ENCODE measurements at regions of chr17 and their contacts with region 1.

Region 1: DNA sequence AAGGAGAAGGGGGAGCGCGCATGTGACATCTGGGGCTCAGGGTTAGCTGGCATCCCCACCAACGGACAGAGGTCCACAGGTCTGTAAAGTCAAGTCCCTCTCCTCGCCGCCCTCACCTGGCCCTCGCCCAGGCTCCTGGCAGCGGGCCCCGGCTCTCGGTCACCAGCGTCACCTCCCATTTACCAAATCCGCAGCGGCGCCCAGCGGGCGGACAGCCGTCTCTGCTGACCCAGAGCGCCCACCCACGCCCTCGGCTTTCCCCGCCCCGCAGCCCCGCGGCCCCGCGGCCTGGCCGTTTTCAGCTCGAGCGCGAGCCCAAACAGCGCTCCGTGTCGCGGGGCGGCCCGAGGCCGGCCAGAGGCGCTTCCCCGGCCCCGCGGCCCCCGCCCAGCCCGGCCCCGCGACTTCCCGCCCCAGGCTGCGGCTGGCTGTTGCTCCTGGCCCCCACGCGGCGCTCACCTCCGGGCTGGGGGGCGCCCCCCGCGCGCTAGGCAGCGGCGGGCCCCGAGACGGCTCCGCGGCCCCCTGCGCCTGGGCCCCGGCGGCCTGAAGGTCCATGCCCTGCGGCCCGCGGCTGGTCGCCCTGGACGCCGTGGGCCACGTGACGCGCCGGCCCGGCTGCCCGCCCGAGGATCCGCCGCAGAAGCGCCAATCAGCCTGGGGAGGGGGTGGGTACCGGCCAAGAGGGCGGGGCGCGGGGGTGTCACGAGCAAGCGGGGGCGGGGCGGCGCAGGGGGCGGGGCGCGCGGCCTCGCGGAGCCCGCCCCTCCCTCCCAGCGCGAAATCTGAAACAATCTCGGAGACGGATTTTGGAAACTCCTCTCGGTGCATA is at the start of gene COPRS:
- DNase-seq: peak; percentile 83
- H3K4me3 Mint-ChIP-seq: peak within 1 kb of the TSS; percentile 86
- H3K27ac Mint-ChIP-seq: peak within 1 kb of the TSS; percentile 42
- H3K4me1 Mint-ChIP-seq: peaks cover 17% of the 10 kb centered on the region
- H3K27me3 Mint-ChIP-seq: no peaks in the 10 kb centered on the region
- total RNA-seq, gene COPRS: 34.4 to 37.6 TPM

Region 2: DNA sequence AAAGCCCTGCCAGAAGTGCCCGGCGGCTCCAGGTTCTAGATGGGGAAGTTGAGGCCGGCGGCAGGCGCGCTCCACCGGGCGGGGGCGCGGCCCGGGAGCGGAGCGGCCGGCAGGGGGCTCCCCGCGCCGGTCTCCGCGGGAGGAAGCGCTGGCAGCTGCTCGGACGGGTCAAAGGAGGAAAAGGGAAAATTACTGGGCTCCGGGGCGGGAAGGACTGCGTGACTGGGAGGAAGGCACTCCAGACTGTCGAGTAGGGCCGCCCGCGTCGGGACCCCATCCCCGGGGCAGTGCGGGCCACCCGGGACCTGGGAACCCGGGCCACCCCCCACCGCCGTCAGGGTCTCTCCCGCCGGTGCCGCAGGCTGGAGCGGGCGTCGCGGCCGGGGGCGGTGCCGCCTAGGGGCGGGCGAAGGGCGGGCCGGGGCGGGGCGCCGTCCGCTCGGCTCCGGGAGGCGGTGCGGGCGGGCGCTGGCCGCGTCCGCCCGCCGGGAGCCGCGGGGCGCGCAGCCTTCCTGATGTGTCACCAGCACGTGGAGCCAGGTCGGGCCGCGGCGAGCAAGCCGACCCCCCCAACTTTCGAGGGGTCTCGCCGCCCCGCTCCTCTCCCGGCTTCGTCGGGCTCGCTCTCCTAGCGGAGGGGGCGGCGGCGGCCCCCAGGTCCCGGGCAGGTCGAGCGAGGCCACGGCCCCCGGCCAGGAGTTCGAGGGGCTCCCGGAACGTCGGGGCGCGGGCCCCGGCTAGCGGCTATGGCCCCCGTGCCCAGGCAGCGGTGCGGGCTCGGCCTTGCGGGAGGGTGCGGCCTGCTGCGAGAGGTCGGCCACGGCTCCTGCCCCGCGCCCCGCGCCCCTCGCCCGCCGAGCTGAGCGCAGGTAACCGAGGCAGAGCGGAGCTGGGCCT is 299.9 kb before region 1 on chr17:
- CTCF ChIA-PET with region 1: no interaction called
- intact Hi-C with region 1: loop called (anchors 5 kb)
- DNase-seq: peak; percentile 61
- H3K4me3 Mint-ChIP-seq: peak overlapping the region; percentile 48
- H3K27ac Mint-ChIP-seq: no peak overlapping the region
- H3K4me1 Mint-ChIP-seq: peaks cover 26% of the 10 kb centered on the region
- H3K27me3 Mint-ChIP-seq: no peaks in the 10 kb centered on the region

Region 3: DNA sequence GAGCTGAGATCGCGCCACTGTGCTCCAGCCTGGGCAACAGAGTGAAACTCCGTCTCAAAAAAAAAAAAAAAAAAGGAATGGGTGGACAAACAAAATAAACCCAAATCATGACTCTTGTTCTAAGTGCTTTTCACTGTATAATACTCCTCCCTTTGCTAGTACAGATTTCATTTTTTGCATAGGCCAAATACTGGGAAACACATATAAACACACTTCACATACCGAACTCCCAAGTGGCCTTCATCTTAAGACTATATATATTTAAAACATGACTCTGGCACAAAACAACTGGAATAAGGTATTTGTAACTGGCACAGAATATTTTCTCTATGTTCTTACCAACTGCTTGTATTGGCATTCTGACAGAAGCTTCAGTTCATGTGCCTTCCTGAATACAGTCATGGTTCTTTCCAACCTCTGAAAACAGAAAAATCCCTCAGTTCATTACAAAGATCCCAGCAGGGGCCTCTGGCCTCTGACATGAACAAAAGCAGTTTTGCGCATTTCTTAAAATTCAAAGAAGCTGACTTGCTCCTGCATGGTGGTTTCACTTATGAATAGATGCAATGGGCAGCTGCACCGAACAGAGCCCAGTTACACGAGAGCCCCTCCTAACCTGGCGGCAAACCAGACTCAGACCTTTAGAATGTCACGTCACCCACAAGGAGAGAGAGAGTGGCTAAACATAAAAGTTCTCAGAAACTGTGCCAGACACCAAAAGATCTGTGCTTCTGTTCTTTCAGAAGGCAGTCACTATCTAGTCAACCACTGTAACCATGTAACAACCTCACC is 19.2 kb after region 1 on chr17:
- CTCF ChIA-PET with region 1: interaction called, 3 read pairs
- intact Hi-C with region 1: loop called (anchors 1 kb)
- DNase-seq: peak; percentile 60
- H3K4me3 Mint-ChIP-seq: no peak overlapping the region
- H3K27ac Mint-ChIP-seq: peak overlapping the region; percentile 92
- H3K4me1 Mint-ChIP-seq: peaks cover 21% of the 10 kb centered on the region
- H3K27me3 Mint-ChIP-seq: no peaks in the 10 kb centered on the region

Region 4: GRCh38 chr17:31888124-31888523 is 29.3 kb after region 1 on chr17:
- CTCF ChIA-PET with region 1: no interaction called
- intact Hi-C with region 1: no loop called
- DNase-seq: no peak
- H3K4me3 Mint-ChIP-seq: no peak overlapping the region
- H3K27ac Mint-ChIP-seq: no peak overlapping the region
- H3K4me1 Mint-ChIP-seq: no peaks in the 10 kb centered on the region
- H3K27me3 Mint-ChIP-seq: no peaks in the 10 kb centered on the region

Measured in activated naive CD4-positive, alpha-beta T cell treated with anti-CD3 and anti-CD28 coated beads for 36 hours (primary cell).